ENCODE measurements at regions of chr1 and their contacts with region 1.

Region 1: GRCh38 chr1:101288491-101288944 is 51.7 kb downstream of the S1PR1 start:
- DNase-seq: no peak

Region 2: DNA sequence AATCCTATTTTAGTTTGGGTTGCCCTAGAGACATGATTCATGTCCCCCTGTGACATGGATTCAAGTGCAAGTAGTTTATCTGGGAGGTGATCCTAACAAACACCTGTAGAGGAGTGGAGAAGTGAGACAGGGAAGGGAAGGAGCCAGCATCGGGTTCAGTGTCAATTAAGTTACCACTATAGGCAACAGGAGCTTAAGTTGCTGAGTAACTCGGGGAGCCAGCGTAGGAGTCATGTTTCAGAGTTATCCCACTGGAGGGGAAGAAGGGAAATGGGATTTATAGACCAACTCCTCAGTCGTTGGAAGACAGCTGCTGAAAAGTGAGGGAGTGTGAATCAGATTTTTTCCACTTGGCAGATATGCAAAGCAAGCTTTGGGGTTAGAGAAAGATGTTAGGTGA is 337.7 kb before region 1 on chr1:
- intact Hi-C with region 1: no loop called
- DNase-seq: no peak

Region 3: GRCh38 chr1:101025657-101026504 is 262.6 kb before region 1 on chr1 and contains the start of gene DPH5:
- intact Hi-C with region 1: loop called (anchors 5 kb)
- DNase-seq: peak; percentile 96
- total RNA-seq, gene DPH5: 35.4 TPM

Region 4: GRCh38 chr1:101136739-101137138 is 151.8 kb before region 1 on chr1:
- intact Hi-C with region 1: loop called (anchors 5 kb)
- DNase-seq: no peak